GM12878 (cell line): ENCODE measurements at regions of chr5 and their contacts with region 1.

Region 1: DNA sequence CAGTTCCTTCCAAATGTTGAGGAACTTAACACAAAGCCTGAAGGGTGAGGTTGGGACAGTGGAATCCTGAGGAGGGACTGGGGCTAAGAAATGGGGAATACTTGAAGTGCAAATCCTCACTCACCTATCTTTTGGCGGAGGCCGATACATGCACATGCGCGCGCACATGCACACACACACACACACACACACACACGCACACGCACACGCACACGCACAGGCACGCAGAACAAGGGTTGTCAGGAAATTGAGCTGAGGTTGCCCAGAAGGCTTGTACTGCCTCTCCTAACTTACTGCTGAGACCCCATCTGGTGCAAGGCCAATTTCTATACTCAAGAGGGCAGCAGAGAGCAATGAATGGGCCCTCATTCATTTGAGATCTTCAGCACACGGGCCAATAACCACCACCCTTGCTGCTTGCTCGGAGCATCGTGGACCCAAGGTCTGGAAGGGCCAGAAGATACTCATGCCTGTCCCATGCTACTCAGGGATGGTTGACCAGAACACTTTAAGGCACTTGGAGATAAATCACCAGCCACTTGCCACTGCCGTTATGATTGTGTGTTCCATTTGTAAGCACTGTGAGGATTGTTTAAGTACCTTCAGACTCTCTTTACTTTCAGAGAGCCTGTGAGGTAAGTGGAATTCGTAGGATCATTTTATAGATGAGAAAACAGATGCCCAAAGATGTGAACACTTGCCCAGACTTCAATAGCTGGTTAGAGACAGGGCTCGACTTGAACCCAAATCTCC is 21.5 kb downstream of the BTF3 start:
- DNase-seq: peak; percentile 48
- ATAC-seq: peak; percentile 100
- H3K4me3 ChIP-seq: no peak overlapping the region
- H3K27ac ChIP-seq: no peak overlapping the region
- H3K4me1 ChIP-seq: no peaks in the 10 kb centered on the region
- H3K27me3 ChIP-seq: no peaks in the 10 kb centered on the region
- CTCF ChIP-seq: peak; percentile 83 to 96 (median 92)
- EP300 ChIP-seq: no peak
- POLR2A ChIP-seq: no peak
- RAD21 ChIP-seq: peak; percentile 91

Region 2: DNA sequence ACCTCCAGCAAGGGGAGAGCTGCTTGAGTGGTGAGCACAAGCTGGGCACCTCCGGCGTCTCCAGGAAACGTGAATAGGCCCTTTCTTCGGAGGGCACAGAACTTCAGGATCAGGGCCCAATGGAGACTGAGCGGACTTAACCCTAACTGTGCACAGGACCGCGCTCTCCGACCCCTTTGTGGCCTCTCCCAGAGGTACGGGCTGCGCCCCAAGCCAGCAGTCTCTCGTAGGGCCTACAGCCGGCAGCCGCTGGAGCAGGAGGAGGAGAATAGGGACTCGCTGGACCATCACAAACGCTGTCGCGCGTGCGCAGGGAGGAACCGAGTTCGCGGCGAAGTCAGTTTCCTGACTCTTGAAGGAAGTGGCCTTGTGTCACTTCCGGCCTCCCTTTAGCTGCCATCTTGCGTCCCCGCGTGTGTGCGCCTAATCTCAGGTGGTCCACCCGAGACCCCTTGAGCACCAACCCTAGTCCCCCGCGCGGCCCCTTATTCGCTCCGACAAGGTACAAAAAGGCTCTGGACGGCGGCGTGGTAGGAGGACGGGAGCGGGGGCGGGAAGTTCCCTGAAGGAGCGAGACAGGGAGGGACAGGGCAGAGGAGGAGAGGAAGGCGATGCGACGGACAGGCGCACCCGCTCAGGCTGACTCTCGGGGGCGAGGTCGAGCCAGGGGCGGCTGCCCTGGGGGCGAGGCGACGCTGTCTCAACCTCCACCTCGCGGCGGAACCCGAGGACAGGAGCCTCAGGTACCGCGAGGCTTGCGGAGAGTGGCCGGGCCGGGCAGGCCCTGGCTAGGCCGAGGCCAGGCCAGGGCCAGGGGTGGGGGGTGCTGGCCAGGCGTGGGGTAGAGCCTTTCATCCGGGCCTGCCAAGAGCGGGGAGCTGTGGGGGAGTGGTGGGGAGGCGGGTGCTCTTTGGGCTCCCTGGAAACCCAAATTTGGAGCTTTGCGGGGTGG is 21.4 kb before region 1 on chr5 and contains the start of gene BTF3:
- CTCF ChIA-PET with region 1: interaction called, 19 read pairs
- POLR2A ChIA-PET with region 1: no interaction called
- RAD21 ChIA-PET with region 1: interaction called, 3 read pairs
- SMC1A ChIA-PET with region 1: interaction called, 3 read pairs
- in situ Hi-C with region 1: no loop called
- intact Hi-C with region 1: no loop called
- DNase-seq: peak; percentile 92
- ATAC-seq: peak; percentile 95
- H3K4me3 ChIP-seq: peak within 1 kb of the TSS; percentile 97
- H3K27ac ChIP-seq: peak within 1 kb of the TSS; percentile 93
- H3K4me1 ChIP-seq: no peaks in the 10 kb centered on the region
- H3K27me3 ChIP-seq: no peaks in the 10 kb centered on the region
- CTCF ChIP-seq: no peak
- EP300 ChIP-seq: no peak
- POLR2A ChIP-seq: peak; percentile 99
- RAD21 ChIP-seq: no peak
- polyA plus RNA-seq, gene BTF3: 1,064 to 1,108 TPM

Region 3: DNA sequence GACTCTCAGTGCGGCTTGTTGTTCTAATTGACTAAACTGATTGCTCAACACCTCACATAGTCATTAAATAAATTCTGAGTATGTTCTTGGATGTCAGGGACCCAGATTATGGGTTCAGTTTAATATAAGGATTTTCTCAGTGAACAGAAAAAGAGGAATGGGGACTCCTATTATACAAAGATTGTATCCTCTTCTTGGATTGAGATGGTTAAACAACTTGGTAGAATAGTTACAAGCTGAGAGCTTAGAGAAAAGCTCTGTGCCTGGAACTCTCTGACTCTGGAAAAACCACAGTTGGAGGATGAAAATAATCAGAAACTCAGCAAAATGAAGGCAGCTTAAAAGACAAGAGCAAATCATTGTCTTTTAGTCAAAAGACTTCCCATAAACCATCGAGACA is 15.3 kb after region 1 on chr5:
- CTCF ChIA-PET with region 1: interaction called, 139 read pairs
- POLR2A ChIA-PET with region 1: no interaction called
- RAD21 ChIA-PET with region 1: interaction called, 5 read pairs
- SMC1A ChIA-PET with region 1: interaction called, 48 read pairs
- in situ Hi-C with region 1: no loop called
- intact Hi-C with region 1: loop called (anchors 1 kb)
- DNase-seq: no peak
- ATAC-seq: no peak
- H3K4me3 ChIP-seq: no peak overlapping the region
- H3K27ac ChIP-seq: no peak overlapping the region
- H3K4me1 ChIP-seq: no peaks in the 10 kb centered on the region
- H3K27me3 ChIP-seq: no peaks in the 10 kb centered on the region; a peak in 2 of 4 replicates
- CTCF ChIP-seq: no peak
- EP300 ChIP-seq: no peak
- POLR2A ChIP-seq: no peak
- RAD21 ChIP-seq: no peak

Region 4: GRCh38 chr5:73540192-73540591 is 20.5 kb after region 1 on chr5:
- CTCF ChIA-PET with region 1: interaction called, 139 read pairs
- POLR2A ChIA-PET with region 1: no interaction called
- RAD21 ChIA-PET with region 1: interaction called, 5 read pairs
- SMC1A ChIA-PET with region 1: interaction called, 48 read pairs
- in situ Hi-C with region 1: no loop called
- intact Hi-C with region 1: loop called (anchors 1 kb)
- DNase-seq: no peak
- ATAC-seq: peak; percentile 17; the same call in 1 of the 3 replicates
- H3K4me3 ChIP-seq: no peak overlapping the region
- H3K27ac ChIP-seq: no peak overlapping the region
- H3K4me1 ChIP-seq: no peaks in the 10 kb centered on the region
- H3K27me3 ChIP-seq: no peaks in the 10 kb centered on the region
- CTCF ChIP-seq: no peak
- EP300 ChIP-seq: no peak
- POLR2A ChIP-seq: no peak
- RAD21 ChIP-seq: no peak